Activated CD4-positive, alpha-beta T cell treated with anti-CD3 and anti-CD28 coated beads, Interleukin-2, amount 10 ng/mL, durations not matched to agents 24 days and 14 days (primary cell): ENCODE measurements at regions of chr11 and their contacts with region 1.

Region 1: GRCh38 chr11:68213555-68214174 is 569 bp upstream of the KMT5B start:
- DNase-seq: peak; percentile 94
- H3K4me3 Mint-ChIP-seq: peak overlapping the region; percentile 75
- H3K27ac Mint-ChIP-seq: peak overlapping the region; percentile 71
- H3K4me1 Mint-ChIP-seq: peaks cover 34% of the 10 kb centered on the region
- H3K27me3 Mint-ChIP-seq: peaks cover 26% of the 10 kb centered on the region

Region 2: GRCh38 chr11:68121067-68121899 is 92.4 kb before region 1 on chr11 and contains the start of gene CHKA:
- intact Hi-C with region 1: loop called (anchors 1 kb)
- DNase-seq: peak; percentile 97
- H3K4me3 Mint-ChIP-seq: peak within 1 kb of the TSS; percentile 87
- H3K27ac Mint-ChIP-seq: peak within 1 kb of the TSS; percentile 84
- H3K4me1 Mint-ChIP-seq: peaks cover 6% of the 10 kb centered on the region
- H3K27me3 Mint-ChIP-seq: peaks cover 12% of the 10 kb centered on the region
- total RNA-seq, gene CHKA: 15.1 TPM in 2 replicates

Region 3: DNA sequence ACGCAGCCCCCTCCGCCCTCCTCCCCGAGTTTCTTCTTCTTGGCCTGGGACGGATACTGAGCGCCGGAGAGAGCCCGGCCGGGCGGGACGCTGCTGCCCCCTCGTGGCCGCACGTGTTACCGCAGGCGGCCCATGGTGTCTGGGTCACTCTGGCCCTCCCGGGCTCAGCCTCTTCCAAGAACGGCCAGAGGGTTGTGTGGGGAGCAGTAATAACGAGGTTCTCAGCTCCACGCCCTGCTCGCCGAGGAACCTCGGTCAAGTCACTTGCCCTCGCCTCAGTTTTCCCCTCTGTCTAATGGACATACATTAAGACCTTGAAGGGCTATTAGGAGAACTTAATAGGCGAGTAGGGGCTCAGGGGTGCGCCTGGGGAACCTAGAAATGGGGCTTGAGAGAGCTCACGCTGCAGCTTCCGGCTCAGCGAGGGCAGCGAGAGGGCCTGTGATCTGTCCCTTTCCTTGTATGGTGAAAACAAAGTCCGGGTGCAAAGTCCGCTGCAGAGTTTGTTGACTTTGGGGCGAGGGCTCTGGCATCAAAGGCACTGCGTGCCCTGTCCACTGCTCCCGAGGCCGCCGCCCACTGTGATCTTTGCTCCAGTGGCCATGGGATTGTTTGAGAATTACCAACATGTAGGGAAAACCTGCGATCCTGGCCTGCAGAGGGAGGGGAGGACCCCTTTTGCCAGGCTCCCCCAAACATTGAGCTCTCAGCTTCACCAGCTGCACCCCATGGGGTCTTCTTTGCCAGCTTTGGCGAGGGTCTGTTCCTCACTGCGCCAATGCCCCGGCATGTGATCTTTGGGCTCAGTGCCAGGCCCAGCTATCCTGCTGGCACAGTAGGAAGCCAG is 84.4 kb after region 1 on chr11:
- intact Hi-C with region 1: loop called (anchors 5 kb)
- DNase-seq: peak; percentile 94
- H3K4me3 Mint-ChIP-seq: no peak overlapping the region
- H3K27ac Mint-ChIP-seq: no peak overlapping the region
- H3K4me1 Mint-ChIP-seq: peaks cover 4% of the 10 kb centered on the region
- H3K27me3 Mint-ChIP-seq: peaks cover 4% of the 10 kb centered on the region